ENCODE measurements at regions of chr3 and their contacts with region 1.

Region 1: DNA sequence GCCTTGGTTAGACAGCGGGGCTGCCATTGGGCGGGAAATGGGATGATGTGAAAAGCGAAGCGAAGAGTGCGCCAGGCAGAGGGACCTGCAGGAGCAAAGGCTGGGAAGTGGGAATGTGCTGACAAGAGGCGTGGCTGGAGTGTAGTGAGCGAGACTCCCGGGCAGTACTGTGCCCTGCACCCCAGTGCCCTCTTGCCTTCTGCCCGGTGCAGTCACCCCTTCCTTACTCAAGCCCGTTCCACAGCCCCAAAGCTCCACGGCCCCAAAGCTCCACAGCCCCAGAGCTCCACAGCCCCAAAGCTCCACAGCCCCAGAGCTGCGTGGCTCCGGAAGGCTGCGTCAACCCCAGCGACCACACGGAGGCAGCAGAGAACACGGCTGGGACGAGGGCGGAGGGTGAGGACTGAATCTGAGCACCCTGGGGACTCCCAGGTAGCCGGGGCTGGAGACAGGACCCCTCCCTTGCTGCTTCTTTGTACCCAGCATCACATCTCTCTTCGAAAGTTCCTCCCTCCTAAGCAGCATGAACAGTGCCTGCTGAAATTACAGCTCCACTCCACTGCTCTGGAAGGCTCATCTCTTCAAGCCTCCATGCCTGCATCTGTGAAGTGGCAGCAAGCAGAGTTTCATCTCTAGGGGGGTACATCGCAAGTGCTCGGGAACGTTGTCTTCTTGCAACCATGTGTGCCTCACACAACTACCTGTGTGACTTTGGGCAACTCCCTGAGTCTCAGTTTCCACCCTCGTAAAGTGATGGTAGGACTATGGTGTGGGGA is 108.9 kb downstream of the FBLN2 start:
- DNase-seq: peak in 5 of 6 donors; percentile 26 to 88 (median 71)
- ATAC-seq: peak; percentile 81 to 94 (median 92)
- H3K4me3 ChIP-seq: no peak overlapping the region
- H3K27ac ChIP-seq: no peak overlapping the region
- H3K4me1 ChIP-seq: no peaks in the 10 kb centered on the region
- H3K27me3 ChIP-seq: peaks cover 0 to 5% (median 2%) of the 10 kb centered on the region in 4 donors
- CTCF ChIP-seq: peak; percentile 59 to 71 (median 68)

Region 2: GRCh38 chr3:13623099-13623654 is 34.7 kb before region 1 on chr3:
- intact Hi-C with region 1: no loop called
- DNase-seq: peak in 1 of 6 donors; percentile 53
- ATAC-seq: peak in 2 of 4 donors; percentile 33 to 61
- H3K4me3 ChIP-seq: no peak overlapping the region
- H3K27ac ChIP-seq: no peak overlapping the region
- H3K4me1 ChIP-seq: no peaks in the 10 kb centered on the region
- H3K27me3 ChIP-seq: no peaks in the 10 kb centered on the region
- CTCF ChIP-seq: no peak

Region 3: GRCh38 chr3:13884851-13885703 is 227.2 kb after region 1 on chr3:
- intact Hi-C with region 1: loop called in 2 of 3 experiments (anchors 5 kb)
- DNase-seq: peak in 5 of 6 donors; percentile 52 to 75 (median 69)
- ATAC-seq: peak; percentile 86 to 95 (median 91)
- H3K4me3 ChIP-seq: no peak overlapping the region
- H3K27ac ChIP-seq: no peak overlapping the region
- H3K4me1 ChIP-seq: peaks cover 0 to 3% (median 0%) of the 10 kb centered on the region in 3 donors
- H3K27me3 ChIP-seq: peaks cover 0 to 5% (median 0%) of the 10 kb centered on the region in 4 donors
- CTCF ChIP-seq: peak; percentile 65 to 78 (median 71)

Measured in pancreas (tissue), 10 donors.